Activated naive CD8-positive, alpha-beta T cell treated with anti-CD3 and anti-CD28 coated beads, Interleukin-2, amount 10 ng/mL, durations not matched to agents 7 days and 5 days (primary cell): ENCODE measurements at regions of chr11 and their contacts with region 1.

Region 1: GRCh38 chr11:118435893-118436624 is at the start of gene KMT2A:
- DNase-seq: peak; percentile 99
- ATAC-seq: peak; percentile 44
- H3K4me3 Mint-ChIP-seq: peak within 1 kb of the TSS; percentile 98
- H3K27ac Mint-ChIP-seq: peak within 1 kb of the TSS; percentile 94
- H3K4me1 Mint-ChIP-seq: peaks cover 28% of the 10 kb centered on the region
- H3K27me3 Mint-ChIP-seq: peaks cover 4% of the 10 kb centered on the region
- total RNA-seq, gene KMT2A: 117 to 126 TPM

Region 2: GRCh38 chr11:118401151-118401878 is 34.7 kb before region 1 on chr11 and contains the start of gene ATP5MG:
- POLR2A ChIA-PET with region 1: interaction called, 22 read pairs
- DNase-seq: peak; percentile 89
- ATAC-seq: peak; percentile 61
- H3K4me3 Mint-ChIP-seq: peak within 1 kb of the TSS; percentile 97
- H3K27ac Mint-ChIP-seq: peak within 1 kb of the TSS; percentile 100
- H3K4me1 Mint-ChIP-seq: peaks cover 47% of the 10 kb centered on the region
- H3K27me3 Mint-ChIP-seq: no peaks in the 10 kb centered on the region
- total RNA-seq, gene ATP5MG: 202 to 224 TPM

Region 3: DNA sequence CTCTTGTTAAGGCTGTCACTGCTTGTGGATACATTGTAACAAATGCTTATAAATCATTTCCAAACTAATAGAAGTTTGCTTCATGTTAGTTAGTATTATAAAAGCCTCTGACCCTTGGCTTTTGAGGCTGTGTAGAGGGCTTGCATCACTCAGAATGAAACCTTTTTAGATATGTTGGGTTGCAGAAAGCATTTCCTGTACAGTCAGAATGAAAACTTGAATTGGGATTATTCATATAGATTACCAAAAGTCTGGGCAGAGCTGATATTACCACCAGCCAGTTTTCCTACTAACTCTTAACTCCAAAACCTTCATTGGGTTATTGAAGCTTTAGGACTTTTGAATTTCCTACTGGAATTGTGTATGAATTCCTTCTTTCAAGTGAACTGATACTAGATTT is 12.2 kb after region 1 on chr11:
- POLR2A ChIA-PET with region 1: interaction called, 15 read pairs
- DNase-seq: no peak
- ATAC-seq: peak; percentile 85
- H3K4me3 Mint-ChIP-seq: peak overlapping the region; percentile 6
- H3K27ac Mint-ChIP-seq: no peak overlapping the region
- H3K4me1 Mint-ChIP-seq: peaks cover 42% of the 10 kb centered on the region
- H3K27me3 Mint-ChIP-seq: no peaks in the 10 kb centered on the region